HCT116 (cell line): ENCODE measurements at regions of chr1 and their contacts with region 1.

Region 1: GRCh38 chr1:32761253-32761880 is 55.8 kb downstream of the YARS1 start:
- DNase-seq: peak; percentile 66
- ATAC-seq: peak; percentile 31
- H3K4me3 ChIP-seq: peak overlapping the region; percentile 48 to 55
- H3K27ac ChIP-seq: peak overlapping the region; percentile 98
- H3K4me1 ChIP-seq: peaks cover 88 to 99% of the 10 kb centered on the region in 2 experiments
- H3K27me3 ChIP-seq: no peaks in the 10 kb centered on the region
- CTCF ChIP-seq: no peak
- POLR2A ChIP-seq: no peak
- RAD21 ChIP-seq: no peak

Region 2: GRCh38 chr1:32650752-32651460 is 110.5 kb before region 1 on chr1 and contains the start of gene RBBP4:
- CTCF ChIA-PET with region 1: no interaction called
- POLR2A ChIA-PET with region 1: no interaction called
- RAD21 ChIA-PET with region 1: no interaction called
- intact Hi-C with region 1: loop called (anchors 5 kb)
- DNase-seq: peak; percentile 91
- ATAC-seq: peak; percentile 90
- H3K4me3 ChIP-seq: peak within 1 kb of the TSS; percentile 89 to 99
- H3K27ac ChIP-seq: peak within 1 kb of the TSS; percentile 95
- H3K4me1 ChIP-seq: peaks cover 11 to 25% of the 10 kb centered on the region in 2 experiments; a peak in 3 of 4 replicates
- H3K27me3 ChIP-seq: no peaks in the 10 kb centered on the region
- CTCF ChIP-seq: no peak
- POLR2A ChIP-seq: peak; percentile 14
- RAD21 ChIP-seq: no peak
- total RNA-seq, gene RBBP4: 279 TPM

Region 3: GRCh38 chr1:32716312-32717148 is 44.8 kb before region 1 on chr1:
- CTCF ChIA-PET with region 1: interaction called, 20 read pairs
- POLR2A ChIA-PET with region 1: interaction called, 4 read pairs
- RAD21 ChIA-PET with region 1: interaction called in 1 of 2 experiments, 9 read pairs
- intact Hi-C with region 1: loop called (anchors 5 kb)
- DNase-seq: peak; percentile 89
- ATAC-seq: peak; percentile 91
- H3K4me3 ChIP-seq: peak overlapping the region; percentile 39 to 49
- H3K27ac ChIP-seq: peak overlapping the region; percentile 53
- H3K4me1 ChIP-seq: peaks cover 18 to 35% of the 10 kb centered on the region in 2 experiments
- H3K27me3 ChIP-seq: no peaks in the 10 kb centered on the region
- CTCF ChIP-seq: no peak
- POLR2A ChIP-seq: peak; percentile 83
- RAD21 ChIP-seq: peak; percentile 39; the same call in 1 of the 2 replicates